ENCODE measurements at regions of chr4 and their contacts with region 1.

Region 1: GRCh38 chr4:182917182-182918043 is at the start of gene DCTD:
- DNase-seq: peak; percentile 78 to 84 (median 81)
- H3K4me3 ChIP-seq: peak within 1 kb of the TSS; percentile 55 to 81
- H3K4me3 Mint-ChIP-seq: peak within 1 kb of the TSS; percentile 83 to 95 (median 92)
- H3K27ac ChIP-seq: peak within 1 kb of the TSS; percentile 94
- H3K27ac Mint-ChIP-seq: peak within 1 kb of the TSS; percentile 85 to 98 (median 95)
- H3K4me1 ChIP-seq: peaks cover 30% of the 10 kb centered on the region
- H3K4me1 Mint-ChIP-seq: peaks cover 27 to 64% (median 39%) of the 10 kb centered on the region in 4 donors
- H3K27me3 ChIP-seq: no peaks in the 10 kb centered on the region
- H3K27me3 Mint-ChIP-seq: no peaks in the 10 kb centered on the region
- total RNA-seq, gene DCTD: 66.6 to 67.7 TPM

Region 2: GRCh38 chr4:182806259-182807252 is 110.9 kb before region 1 on chr4:
- CTCF ChIA-PET with region 1: no interaction called
- POLR2A ChIA-PET with region 1: no interaction called
- intact Hi-C with region 1: loop called (anchors 2 kb)
- DNase-seq: peak; percentile 11 to 53 (median 48)
- H3K4me3 ChIP-seq: peak overlapping the region in 1 of 2 donors; percentile 28
- H3K4me3 Mint-ChIP-seq: peak overlapping the region; percentile 31 to 92 (median 76)
- H3K27ac ChIP-seq: no peak overlapping the region
- H3K27ac Mint-ChIP-seq: peak overlapping the region in 5 of 7 donors; percentile 30 to 77 (median 56)
- H3K4me1 ChIP-seq: peaks cover 25% of the 10 kb centered on the region
- H3K4me1 Mint-ChIP-seq: peaks cover 8 to 19% (median 9%) of the 10 kb centered on the region in 4 donors
- H3K27me3 ChIP-seq: no peaks in the 10 kb centered on the region
- H3K27me3 Mint-ChIP-seq: peaks cover 0 to 1% of the 10 kb centered on the region in 2 donors

Region 3: DNA sequence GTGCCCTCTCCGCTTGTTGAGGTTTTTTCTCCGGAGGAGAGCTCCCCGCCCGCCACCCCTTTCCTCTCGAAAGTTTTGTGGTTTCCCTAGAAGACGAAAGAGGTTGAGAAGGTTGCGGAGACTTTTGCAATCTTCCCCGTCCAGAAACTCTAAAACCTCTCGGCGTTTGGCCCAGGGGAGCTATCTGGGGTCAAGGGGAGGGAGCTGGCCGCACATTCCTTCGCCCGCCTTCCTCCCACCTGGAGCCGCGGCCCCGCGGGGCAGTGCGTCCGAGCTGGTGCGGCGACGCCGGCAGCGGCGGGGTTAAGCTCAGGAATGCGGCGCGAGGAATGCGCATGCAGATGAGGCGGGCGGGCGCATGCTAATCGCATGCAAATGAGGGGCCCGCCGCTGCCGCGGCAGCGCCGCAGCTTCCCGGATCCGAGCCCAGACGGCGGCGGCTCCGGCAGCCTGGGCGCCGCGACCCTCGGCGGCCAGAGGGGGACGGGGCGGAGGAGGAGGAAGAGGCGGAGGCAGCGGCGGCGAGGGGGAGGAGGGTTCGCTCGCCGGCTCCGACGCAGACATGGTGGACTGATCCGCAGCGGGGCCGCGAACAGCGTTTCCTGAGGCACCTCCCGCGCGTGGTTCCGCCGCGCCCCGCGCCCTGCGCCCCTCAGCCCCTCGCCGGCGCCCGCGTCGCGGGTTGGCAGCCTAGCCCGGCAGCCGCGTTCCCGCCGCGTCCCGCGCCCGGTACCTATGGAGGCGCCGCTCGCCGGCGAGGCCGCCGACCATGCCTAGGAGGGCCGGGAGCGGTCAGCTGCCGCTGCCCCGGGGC is 181.5 kb after region 1 on chr4 and contains the start of gene WWC2:
- CTCF ChIA-PET with region 1: no interaction called
- POLR2A ChIA-PET with region 1: interaction called, 12 read pairs
- intact Hi-C with region 1: loop called (anchors 2 kb)
- DNase-seq: peak; percentile 62 to 71 (median 62)
- H3K4me3 ChIP-seq: peak within 1 kb of the TSS; percentile 45 to 52
- H3K4me3 Mint-ChIP-seq: peak within 1 kb of the TSS; percentile 76 to 86 (median 78)
- H3K27ac ChIP-seq: no peak within 1 kb of the TSS
- H3K27ac Mint-ChIP-seq: peak within 1 kb of the TSS in 2 of 7 donors; percentile 19 to 50
- H3K4me1 ChIP-seq: peaks cover 14% of the 10 kb centered on the region
- H3K4me1 Mint-ChIP-seq: peaks cover 8 to 37% (median 21%) of the 10 kb centered on the region in 4 donors
- H3K27me3 ChIP-seq: peaks cover 3% of the 10 kb centered on the region
- H3K27me3 Mint-ChIP-seq: peaks cover 0 to 3% of the 10 kb centered on the region in 2 donors
- total RNA-seq, gene WWC2: 7.3 to 7.6 TPM

Region 4: GRCh38 chr4:183398227-183399125 is 481.1 kb after region 1 on chr4:
- CTCF ChIA-PET with region 1: no interaction called
- POLR2A ChIA-PET with region 1: no interaction called
- intact Hi-C with region 1: loop called (anchors 10 kb)
- DNase-seq: peak; percentile 49 to 57 (median 52)
- H3K4me3 ChIP-seq: peak overlapping the region; percentile 64 to 76
- H3K4me3 Mint-ChIP-seq: peak overlapping the region; percentile 86 to 97 (median 93)
- H3K27ac ChIP-seq: peak overlapping the region; percentile 25
- H3K27ac Mint-ChIP-seq: peak overlapping the region in 6 of 7 donors; percentile 48 to 93 (median 80)
- H3K4me1 ChIP-seq: peaks cover 5% of the 10 kb centered on the region
- H3K4me1 Mint-ChIP-seq: peaks cover 6 to 23% (median 15%) of the 10 kb centered on the region in 4 donors
- H3K27me3 ChIP-seq: no peaks in the 10 kb centered on the region
- H3K27me3 Mint-ChIP-seq: peaks cover 1 to 7% of the 10 kb centered on the region in 2 donors

Region 5: GRCh38 chr4:183659029-183659871 is 741.8 kb after region 1 on chr4 and contains the starts of genes RWDD4 and TRAPPC11:
- CTCF ChIA-PET with region 1: no interaction called
- POLR2A ChIA-PET with region 1: no interaction called
- intact Hi-C with region 1: loop called (anchors 10 kb)
- DNase-seq: peak; percentile 95 to 98 (median 96)
- H3K4me3 ChIP-seq: peak within 1 kb of the TSS; percentile 89 to 91
- H3K4me3 Mint-ChIP-seq: peak within 1 kb of the TSS; percentile 91 to 98 (median 94)
- H3K27ac ChIP-seq: peak within 1 kb of the TSS; percentile 93
- H3K27ac Mint-ChIP-seq: peak within 1 kb of the TSS; percentile 75 to 99 (median 97)
- H3K4me1 ChIP-seq: peaks cover 37% of the 10 kb centered on the region
- H3K4me1 Mint-ChIP-seq: peaks cover 25 to 54% (median 41%) of the 10 kb centered on the region in 4 donors
- H3K27me3 ChIP-seq: no peaks in the 10 kb centered on the region
- H3K27me3 Mint-ChIP-seq: no peaks in the 10 kb centered on the region
- total RNA-seq, gene RWDD4: 12.0 to 13.8 TPM
- total RNA-seq, gene TRAPPC11: 42.2 to 51.0 TPM